Posterior vena cava (tissue), 2 donors: ENCODE measurements at regions of chr9 and their contacts with region 1.

Region 1: GRCh38 chr9:21096172-21096900 is 18.6 kb upstream of the IFNB1 start:
- DNase-seq: no peak

Region 2: GRCh38 chr9:21119093-21119770 is 22.9 kb after region 1 on chr9:
- intact Hi-C with region 1: no loop called
- DNase-seq: no peak

Region 3: GRCh38 chr9:21135504-21136135 is 39.3 kb after region 1 on chr9:
- intact Hi-C with region 1: loop called in 1 of 2 experiments (anchors 2 kb)
- DNase-seq: no peak